Activated CD4-positive, alpha-beta T cell treated with anti-CD3 and anti-CD28 coated beads for 36 hours (primary cell): ENCODE measurements at regions of chr17 and their contacts with region 1.

Region 1: DNA sequence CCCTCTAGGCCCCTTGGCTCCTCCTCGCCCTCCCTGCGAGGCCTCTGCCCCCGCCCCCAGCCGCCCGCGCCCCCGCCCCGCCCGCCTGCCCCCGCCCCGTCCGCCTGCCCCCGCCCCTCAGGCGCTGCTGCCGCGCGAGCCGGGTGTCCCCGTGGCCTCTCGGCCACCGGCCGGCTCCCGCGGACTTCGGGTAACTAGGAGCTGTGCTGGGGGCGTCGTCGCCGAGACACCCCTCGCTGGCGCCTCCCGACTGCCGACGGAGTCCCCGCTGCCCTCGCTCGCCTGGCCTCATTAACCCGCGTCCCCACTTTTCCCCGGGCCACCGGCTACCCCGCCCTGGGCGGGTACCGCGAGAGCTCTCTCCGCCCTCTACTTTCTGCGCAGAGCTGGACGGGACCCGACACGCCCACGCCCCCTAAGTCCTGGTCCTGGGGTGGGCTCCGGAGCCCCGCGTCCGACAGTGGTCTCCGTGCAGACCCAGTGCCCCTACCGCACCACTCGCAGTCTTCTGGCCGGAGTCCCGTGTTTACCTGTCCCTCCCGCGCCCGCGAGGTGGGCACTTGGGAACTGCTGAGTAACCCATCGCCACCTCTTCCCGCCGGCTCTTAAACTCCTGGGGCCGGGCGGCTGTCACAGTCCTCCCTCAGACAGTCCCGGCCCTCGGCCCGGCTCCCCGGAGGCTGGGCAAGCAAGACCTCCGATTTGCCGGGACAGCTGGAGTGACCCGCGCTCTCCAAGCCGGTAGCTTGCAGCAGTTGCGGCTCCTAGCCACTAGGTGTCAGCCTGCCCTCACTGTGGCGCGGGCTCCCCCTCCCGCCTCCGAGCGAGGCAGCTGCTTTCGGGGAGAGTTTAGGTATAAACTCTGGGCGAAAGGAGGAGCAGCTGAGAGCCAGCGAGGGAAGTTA is at the start of gene TLCD1:
- DNase-seq: peak; percentile 97
- ATAC-seq: peak; percentile 35
- H3K4me3 Mint-ChIP-seq: peak within 1 kb of the TSS; percentile 99
- H3K27ac Mint-ChIP-seq: peak within 1 kb of the TSS; percentile 99
- H3K4me1 Mint-ChIP-seq: peaks cover 52% of the 10 kb centered on the region
- H3K27me3 Mint-ChIP-seq: no peaks in the 10 kb centered on the region
- total RNA-seq, gene TLCD1: 8.5 to 8.7 TPM

Region 2: DNA sequence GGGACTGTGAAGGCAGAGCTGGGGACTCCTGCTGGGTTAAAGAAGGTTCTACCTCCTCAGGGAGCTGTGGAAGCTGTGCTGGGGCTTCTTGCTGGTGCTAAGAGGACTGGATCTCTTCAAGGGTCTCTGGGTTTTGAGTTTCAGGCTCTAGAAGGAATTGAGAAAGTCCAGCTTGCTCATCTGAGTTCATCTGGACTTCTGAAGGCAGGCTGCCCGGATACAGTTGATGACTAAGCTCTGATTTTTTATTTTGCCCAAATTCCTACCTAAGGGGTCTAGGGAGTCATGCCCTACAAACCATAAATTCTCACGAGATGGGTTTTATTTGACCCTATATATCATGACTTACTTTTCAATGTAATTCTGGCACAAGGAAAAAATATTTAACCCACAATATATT is 454.3 kb before region 1 on chr17:
- CTCF ChIA-PET with region 1: no interaction called
- POLR2A ChIA-PET with region 1: no interaction called
- intact Hi-C with region 1: no loop called
- DNase-seq: no peak
- ATAC-seq: no peak
- H3K4me3 Mint-ChIP-seq: no peak overlapping the region
- H3K27ac Mint-ChIP-seq: no peak overlapping the region
- H3K4me1 Mint-ChIP-seq: peaks cover 2% of the 10 kb centered on the region
- H3K27me3 Mint-ChIP-seq: peaks cover 48% of the 10 kb centered on the region

Region 3: GRCh38 chr17:28750178-28751047 is 23.9 kb after region 1 on chr17:
- CTCF ChIA-PET with region 1: interaction called, 294 read pairs
- POLR2A ChIA-PET with region 1: interaction called, 111 read pairs
- intact Hi-C with region 1: loop called (anchors 1 kb)
- DNase-seq: peak; percentile 96
- ATAC-seq: peak; percentile 87
- H3K4me3 Mint-ChIP-seq: no peak overlapping the region
- H3K27ac Mint-ChIP-seq: peak overlapping the region; percentile 60
- H3K4me1 Mint-ChIP-seq: peaks cover 43% of the 10 kb centered on the region
- H3K27me3 Mint-ChIP-seq: no peaks in the 10 kb centered on the region

Region 4: DNA sequence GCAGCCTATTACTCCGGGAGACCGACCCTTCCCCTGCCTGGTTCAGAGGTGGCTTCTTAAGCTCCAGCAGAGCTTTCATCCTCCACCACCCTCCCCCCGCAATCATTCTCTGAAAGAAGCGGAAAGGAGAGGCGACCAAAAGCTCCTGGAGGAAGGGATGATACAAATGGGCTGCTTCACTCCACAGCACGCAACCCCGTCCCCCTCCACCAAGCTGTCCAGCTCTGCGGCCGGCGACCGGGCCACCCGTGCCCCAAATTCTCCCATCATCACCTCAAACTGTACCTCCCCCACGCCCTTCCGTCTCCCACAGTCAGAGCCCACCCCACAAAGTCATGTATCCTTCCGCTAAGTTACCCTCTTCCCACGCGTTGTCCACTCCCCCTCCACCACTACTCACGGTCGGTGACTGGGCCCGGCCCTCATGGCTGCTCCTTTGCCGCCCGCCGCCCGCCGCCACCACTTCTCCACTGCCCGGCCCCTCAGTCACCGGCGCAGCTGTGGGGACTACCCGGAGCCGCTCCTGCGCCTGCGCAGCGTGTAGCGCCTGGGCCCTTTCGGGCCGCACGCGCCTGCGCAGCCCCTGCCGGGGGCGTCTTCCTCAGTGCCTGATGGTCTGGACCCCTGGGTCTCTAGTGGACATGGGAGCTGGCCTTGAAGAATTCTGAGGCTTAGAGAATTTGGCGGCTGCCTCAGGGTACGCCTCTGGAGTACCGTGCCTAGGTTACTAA is 116.0 kb after region 1 on chr17 and contains the start of gene FAM222B:
- CTCF ChIA-PET with region 1: interaction called, 15 read pairs
- POLR2A ChIA-PET with region 1: interaction called, 4 read pairs
- intact Hi-C with region 1: loop called (anchors 1 to 5 kb)
- DNase-seq: peak; percentile 93
- ATAC-seq: peak; percentile 99
- H3K4me3 Mint-ChIP-seq: peak within 1 kb of the TSS; percentile 93
- H3K27ac Mint-ChIP-seq: peak within 1 kb of the TSS; percentile 90
- H3K4me1 Mint-ChIP-seq: peaks cover 20% of the 10 kb centered on the region
- H3K27me3 Mint-ChIP-seq: no peaks in the 10 kb centered on the region
- total RNA-seq, gene FAM222B: 16.8 to 20.8 TPM

Region 5: GRCh38 chr17:28902819-28903545 is 176.5 kb after region 1 on chr17 and contains the start of gene DHRS13:
- CTCF ChIA-PET with region 1: interaction called, 18 read pairs
- POLR2A ChIA-PET with region 1: interaction called, 5 read pairs
- intact Hi-C with region 1: loop called (anchors 1 kb)
- DNase-seq: peak; percentile 97
- ATAC-seq: peak; percentile 89
- H3K4me3 Mint-ChIP-seq: peak within 1 kb of the TSS; percentile 87
- H3K27ac Mint-ChIP-seq: peak within 1 kb of the TSS; percentile 92
- H3K4me1 Mint-ChIP-seq: peaks cover 34% of the 10 kb centered on the region
- H3K27me3 Mint-ChIP-seq: no peaks in the 10 kb centered on the region
- total RNA-seq, gene DHRS13: 23.3 to 29.5 TPM

Region 6: DNA sequence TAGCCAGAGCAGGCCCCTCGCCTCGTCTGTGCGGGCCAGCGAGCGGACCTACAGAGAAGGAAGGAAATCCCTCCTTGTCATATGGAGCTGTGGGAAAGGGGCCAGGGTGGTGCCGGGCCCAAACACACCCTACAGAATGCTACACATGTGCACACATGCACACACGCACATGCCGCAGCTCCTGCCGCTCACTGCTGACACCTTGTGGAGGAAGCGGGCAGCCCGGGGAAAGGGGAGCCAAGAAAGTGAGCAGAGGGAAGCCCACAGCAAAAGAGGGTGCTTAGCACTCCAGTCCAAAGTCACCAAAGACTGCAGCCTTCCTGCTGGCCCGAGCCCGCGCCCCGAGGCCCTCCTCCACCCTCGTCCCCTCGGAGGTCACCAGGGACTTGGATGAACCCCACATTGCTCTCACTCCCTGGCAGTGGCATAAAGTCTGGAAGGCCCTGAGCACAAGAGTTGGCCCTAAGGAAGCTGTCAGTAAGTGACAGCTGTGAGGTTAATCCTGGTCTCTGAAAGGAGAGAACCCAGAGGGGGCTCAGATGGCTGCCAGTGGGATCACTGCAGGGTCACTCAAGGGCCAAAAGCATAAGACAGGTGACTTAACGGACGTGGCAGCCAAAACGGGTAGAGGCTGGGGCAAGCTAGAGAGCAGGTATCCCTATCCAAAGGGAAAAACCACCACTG is 385.5 kb after region 1 on chr17:
- CTCF ChIA-PET with region 1: interaction called, 13 read pairs
- POLR2A ChIA-PET with region 1: interaction called, 4 read pairs
- intact Hi-C with region 1: loop called (anchors 2 to 10 kb)
- DNase-seq: peak; percentile 86
- ATAC-seq: peak; percentile 86
- H3K4me3 Mint-ChIP-seq: no peak overlapping the region
- H3K27ac Mint-ChIP-seq: no peak overlapping the region
- H3K4me1 Mint-ChIP-seq: peaks cover 3% of the 10 kb centered on the region
- H3K27me3 Mint-ChIP-seq: no peaks in the 10 kb centered on the region

Region 7: DNA sequence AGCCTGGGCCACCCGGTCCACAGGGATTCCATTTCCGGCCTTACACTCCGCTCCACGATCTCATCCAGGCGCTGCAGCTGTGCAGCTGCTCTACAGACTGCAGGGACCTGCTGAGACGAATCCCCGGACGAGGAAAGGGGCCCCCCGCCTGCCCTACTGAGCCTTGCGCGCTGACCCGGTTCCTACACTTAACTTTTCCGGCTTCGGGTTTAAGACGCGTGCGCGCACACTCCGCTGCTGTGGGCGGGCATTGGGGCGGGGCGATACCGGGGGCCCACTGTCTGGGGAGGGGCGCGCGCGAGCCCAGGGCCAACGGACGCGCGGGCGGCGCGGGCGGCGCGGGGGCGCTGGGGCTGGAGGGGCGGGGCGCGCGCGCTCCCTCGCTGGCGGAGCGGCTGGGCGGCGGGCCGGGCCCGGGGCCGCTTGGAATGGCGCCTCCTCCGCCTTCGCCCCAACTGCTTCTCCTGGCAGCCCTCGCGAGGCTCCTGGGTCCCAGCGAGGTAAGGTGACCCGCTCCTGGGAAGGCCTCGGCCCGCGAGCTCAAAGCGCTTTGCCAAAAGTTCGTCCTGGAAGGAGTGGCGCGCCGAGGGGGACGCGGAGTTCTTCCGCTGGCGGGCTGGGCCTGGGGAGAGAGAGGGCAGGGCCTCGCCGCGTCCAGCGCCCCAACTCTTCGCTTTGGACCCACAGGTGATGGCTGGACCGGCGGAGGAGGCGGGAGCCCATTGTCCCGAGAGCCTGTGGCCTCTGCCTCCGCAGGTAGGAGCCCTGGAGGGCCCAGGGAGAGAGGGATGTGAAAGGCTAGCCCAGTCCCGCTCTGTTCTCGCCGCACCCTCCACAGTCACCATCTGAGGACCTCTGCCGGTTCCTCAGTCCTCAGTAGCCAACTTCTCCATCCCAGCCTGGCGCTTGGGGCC is 842.1 kb after region 1 on chr17 and contains the start of gene TP53I13:
- CTCF ChIA-PET with region 1: no interaction called
- POLR2A ChIA-PET with region 1: no interaction called
- intact Hi-C with region 1: loop called in 1 of 2 experiments (anchors 5 kb)
- DNase-seq: peak; percentile 96
- ATAC-seq: peak; percentile 64
- H3K4me3 Mint-ChIP-seq: peak within 1 kb of the TSS; percentile 97
- H3K27ac Mint-ChIP-seq: peak within 1 kb of the TSS; percentile 96
- H3K4me1 Mint-ChIP-seq: peaks cover 30% of the 10 kb centered on the region
- H3K27me3 Mint-ChIP-seq: no peaks in the 10 kb centered on the region
- total RNA-seq, gene TP53I13: 37.7 to 41.5 TPM